ENCODE measurements at regions of chr17 and their contacts with region 1.

Region 1: DNA sequence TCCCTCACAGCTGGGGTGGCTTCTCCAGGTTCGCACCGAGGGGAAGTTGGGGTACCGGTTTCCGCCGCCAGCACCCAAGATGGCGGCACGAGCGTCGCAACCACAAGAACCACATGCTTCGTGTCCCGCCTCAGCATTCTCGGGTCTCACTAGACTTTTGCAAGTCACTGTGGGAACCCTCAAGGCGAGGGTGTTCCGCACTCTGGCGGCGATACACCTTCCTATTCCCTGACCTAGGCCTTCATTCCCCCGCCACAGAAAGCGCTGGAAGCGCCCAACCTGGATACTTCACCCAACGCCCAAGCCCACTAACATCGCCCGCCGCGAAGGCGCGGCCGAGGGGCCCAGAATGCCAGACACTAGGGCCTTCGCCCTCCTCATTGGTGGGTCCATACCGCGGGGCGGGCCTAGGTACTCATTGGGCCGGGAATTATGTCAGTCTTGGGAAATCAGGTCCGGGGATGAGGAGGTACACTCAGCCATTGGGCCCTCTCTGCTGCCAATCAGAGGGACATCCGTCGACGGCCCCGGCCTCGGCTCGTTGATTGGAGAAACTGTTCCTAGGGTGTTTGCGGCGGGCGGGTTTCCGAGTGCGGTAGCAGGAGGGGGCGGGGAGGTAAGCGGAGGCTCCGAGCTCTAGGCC is at the start of gene NFE2L1:
- DNase-seq: peak; percentile 97
- H3K4me3 ChIP-seq: peak within 1 kb of the TSS; percentile 77 to 90
- H3K27ac ChIP-seq: peak within 1 kb of the TSS; percentile 95 to 98
- H3K4me1 ChIP-seq: peaks cover 42 to 46% of the 10 kb centered on the region in 2 experiments
- H3K27me3 ChIP-seq: no peaks in the 10 kb centered on the region
- CTCF ChIP-seq: no peak
- EP300 ChIP-seq: peak in 1 of 2 experiments; percentile 14; a peak in 1 of 4 replicates
- RAD21 ChIP-seq: no peak
- polyA plus RNA-seq, gene NFE2L1: 159 and 174 TPM in 2 replicates

Region 2: DNA sequence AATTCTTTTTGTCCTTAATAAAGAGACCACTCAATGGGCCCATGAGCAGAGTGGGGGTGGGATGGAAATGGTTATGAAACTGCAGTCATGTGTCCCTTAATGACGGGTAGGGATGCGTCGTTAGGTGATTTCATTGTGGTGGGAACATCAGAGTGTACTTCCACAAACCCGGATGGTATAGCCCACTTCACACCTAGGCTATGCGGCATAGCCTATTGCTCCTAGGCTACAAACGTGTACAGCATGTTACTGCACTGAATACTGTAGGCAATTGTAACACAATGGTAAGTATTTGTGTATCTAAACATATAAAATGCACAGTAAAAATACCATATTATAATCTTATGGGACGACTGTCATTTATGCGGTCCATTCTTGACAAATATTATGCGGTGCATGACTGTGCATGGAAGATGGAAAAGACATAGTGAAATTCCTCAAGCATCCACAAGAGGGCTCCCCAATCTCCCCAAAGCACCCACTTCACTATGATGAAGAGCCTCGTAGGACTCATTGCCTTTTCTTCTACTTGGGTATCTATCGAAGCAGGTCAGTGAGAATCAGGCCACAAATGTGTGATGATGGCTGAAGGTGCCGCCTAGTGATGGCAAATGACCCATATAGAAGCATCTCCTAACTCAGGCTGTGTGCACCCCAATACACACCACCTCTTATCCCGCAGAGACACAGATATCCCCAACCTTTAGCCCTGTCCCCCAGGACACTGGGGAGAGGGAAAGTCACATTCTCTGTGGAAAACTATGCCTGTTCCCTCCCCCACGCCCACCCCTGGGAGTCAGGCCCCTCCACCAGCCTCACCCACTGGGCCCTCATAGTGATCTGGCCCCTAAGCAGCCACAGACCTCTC is 271.3 kb before region 1 on chr17:
- CTCF ChIA-PET with region 1: no interaction called
- POLR2A ChIA-PET with region 1: no interaction called
- DNase-seq: peak; percentile 81
- H3K4me3 ChIP-seq: no peak overlapping the region; a peak in 1 of 4 replicates
- H3K27ac ChIP-seq: no peak overlapping the region
- H3K4me1 ChIP-seq: peaks cover 0 to 4% of the 10 kb centered on the region in 2 experiments; a peak in 1 of 4 replicates
- H3K27me3 ChIP-seq: peaks cover 73% of the 10 kb centered on the region
- CTCF ChIP-seq: peak; percentile 78
- EP300 ChIP-seq: no peak
- RAD21 ChIP-seq: peak; percentile 76

Region 3: GRCh38 chr17:48002266-48002915 is 45.5 kb before region 1 on chr17:
- CTCF ChIA-PET with region 1: interaction called, 4 read pairs
- POLR2A ChIA-PET with region 1: interaction called, 15 read pairs
- DNase-seq: no peak
- H3K4me3 ChIP-seq: peak overlapping the region in 1 of 2 experiments; percentile 43; a peak in 2 of 4 replicates
- H3K27ac ChIP-seq: peak overlapping the region; percentile 99 to 100
- H3K4me1 ChIP-seq: peaks cover 61 to 65% of the 10 kb centered on the region in 2 experiments
- H3K27me3 ChIP-seq: no peaks in the 10 kb centered on the region
- CTCF ChIP-seq: no peak
- EP300 ChIP-seq: no peak
- RAD21 ChIP-seq: no peak

Region 4: GRCh38 chr17:48030531-48030930 is 17.3 kb before region 1 on chr17:
- CTCF ChIA-PET with region 1: interaction called, 1,200 read pairs
- POLR2A ChIA-PET with region 1: interaction called, 34 read pairs
- DNase-seq: no peak
- H3K4me3 ChIP-seq: no peak overlapping the region
- H3K27ac ChIP-seq: no peak overlapping the region
- H3K4me1 ChIP-seq: peaks cover 8 to 14% of the 10 kb centered on the region in 2 experiments; a peak in 3 of 4 replicates
- H3K27me3 ChIP-seq: no peaks in the 10 kb centered on the region
- CTCF ChIP-seq: no peak
- EP300 ChIP-seq: no peak
- RAD21 ChIP-seq: no peak

Region 5: GRCh38 chr17:48068491-48068961 is 20.7 kb after region 1 on chr17:
- CTCF ChIA-PET with region 1: interaction called, 449 read pairs
- POLR2A ChIA-PET with region 1: interaction called, 9 read pairs
- DNase-seq: no peak
- H3K4me3 ChIP-seq: no peak overlapping the region
- H3K27ac ChIP-seq: 0 out of 4 replicates have a peak overlapping the region, but pooled peaks of 1 of the 2 experiments have one; percentile 10
- H3K4me1 ChIP-seq: no peaks in the 10 kb centered on the region; a peak in 2 of 4 replicates
- H3K27me3 ChIP-seq: no peaks in the 10 kb centered on the region
- CTCF ChIP-seq: peak; percentile 62
- EP300 ChIP-seq: no peak
- RAD21 ChIP-seq: 0 out of 2 replicates have a peak, but pooled peaks have one; percentile 7

Region 6: DNA sequence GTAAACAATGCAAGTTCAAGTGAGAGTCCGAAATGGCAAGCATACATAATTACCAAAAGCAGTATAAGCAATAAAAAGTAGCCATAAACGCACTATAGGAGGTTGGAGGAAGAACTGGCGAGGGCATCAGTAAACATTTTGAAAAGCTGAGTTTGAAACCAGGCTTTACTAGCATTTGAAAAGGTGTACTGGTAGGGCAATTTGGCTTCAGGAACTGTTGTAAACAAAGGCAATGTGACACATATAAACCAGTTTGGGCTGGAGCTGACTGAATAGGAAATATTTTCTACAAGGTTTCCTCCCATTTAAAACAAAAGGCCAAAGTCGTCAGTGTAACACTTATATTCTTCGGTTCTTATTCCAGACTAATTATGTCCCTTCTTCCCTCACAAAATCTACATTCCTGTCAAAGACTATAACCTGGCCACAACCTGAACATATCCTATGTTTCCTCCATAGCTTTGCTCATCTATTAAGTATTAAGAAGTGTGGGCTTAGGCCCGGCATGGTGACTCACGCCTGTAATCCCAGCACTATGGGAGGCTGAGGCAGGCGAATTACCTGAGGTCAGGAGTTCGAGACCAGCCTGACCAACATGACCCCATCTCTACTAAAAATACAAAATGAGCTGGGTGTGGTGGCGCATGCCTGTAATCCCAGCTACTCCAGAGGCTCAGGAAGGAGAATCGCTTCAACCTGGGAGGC is 45.6 kb after region 1 on chr17:
- CTCF ChIA-PET with region 1: interaction called, 33 read pairs
- POLR2A ChIA-PET with region 1: interaction called, 4 read pairs
- DNase-seq: no peak
- H3K4me3 ChIP-seq: no peak overlapping the region
- H3K27ac ChIP-seq: no peak overlapping the region
- H3K4me1 ChIP-seq: no peaks in the 10 kb centered on the region
- H3K27me3 ChIP-seq: no peaks in the 10 kb centered on the region
- CTCF ChIP-seq: no peak
- EP300 ChIP-seq: no peak
- RAD21 ChIP-seq: no peak

Region 7: GRCh38 chr17:48107168-48108132 is 59.6 kb after region 1 on chr17 and contains the start of gene SNX11:
- CTCF ChIA-PET with region 1: interaction called, 3 read pairs
- POLR2A ChIA-PET with region 1: interaction called, 13 read pairs
- DNase-seq: peak; percentile 98
- H3K4me3 ChIP-seq: peak within 1 kb of the TSS; percentile 70 to 89
- H3K27ac ChIP-seq: peak within 1 kb of the TSS; percentile 76 to 92
- H3K4me1 ChIP-seq: peaks cover 4 to 7% of the 10 kb centered on the region in 2 experiments; a peak in 3 of 4 replicates
- H3K27me3 ChIP-seq: no peaks in the 10 kb centered on the region
- CTCF ChIP-seq: peak; percentile 21; the same call in 1 of the 2 replicates
- EP300 ChIP-seq: no peak
- RAD21 ChIP-seq: no peak
- polyA plus RNA-seq, gene SNX11: 19.0 and 31.6 TPM in 2 replicates

Region 8: DNA sequence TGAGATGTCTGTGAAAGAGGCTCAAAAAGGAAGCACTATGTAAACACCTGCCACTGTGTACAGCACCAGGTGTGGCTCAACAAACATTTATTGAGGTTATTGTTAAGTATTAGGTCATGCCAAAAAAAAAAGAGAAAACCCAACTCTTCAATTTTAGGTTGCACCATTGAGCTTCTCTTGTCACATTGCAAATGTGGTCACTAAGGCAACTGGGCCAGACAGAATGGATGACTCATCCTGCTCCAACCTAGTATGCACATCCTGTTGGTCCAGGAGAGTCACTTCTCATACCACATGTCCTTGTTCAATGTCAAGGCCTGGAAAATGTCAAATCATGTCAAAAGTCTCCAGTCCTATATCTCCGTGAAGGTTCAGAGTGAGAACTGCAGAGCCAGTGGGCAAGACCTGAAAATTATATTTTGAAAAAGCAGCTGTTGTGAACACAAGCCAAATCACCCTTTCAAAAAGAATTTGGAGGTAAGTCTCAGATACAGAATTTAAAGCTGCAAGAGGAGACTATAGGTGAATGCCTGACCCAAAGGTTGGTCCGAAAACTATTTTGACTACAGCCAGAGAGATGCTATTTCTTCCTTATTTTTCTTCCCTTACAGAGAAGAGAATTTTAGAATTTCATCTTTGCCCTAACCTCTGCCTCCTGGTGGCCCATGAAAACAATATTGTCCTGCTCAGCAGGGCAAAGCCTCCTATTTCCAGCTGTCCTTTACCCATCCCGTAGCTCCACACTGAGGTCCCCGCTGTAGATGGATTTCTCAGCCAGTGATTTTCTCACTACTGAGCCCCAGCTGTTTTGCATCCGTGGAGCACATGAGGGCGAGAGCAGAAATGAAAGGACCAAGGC is 458.2 kb after region 1 on chr17:
- CTCF ChIA-PET with region 1: no interaction called
- POLR2A ChIA-PET with region 1: no interaction called
- DNase-seq: no peak
- H3K4me3 ChIP-seq: no peak overlapping the region
- H3K27ac ChIP-seq: no peak overlapping the region; a peak in 1 of 4 replicates
- H3K4me1 ChIP-seq: no peaks in the 10 kb centered on the region
- H3K27me3 ChIP-seq: peaks cover 72% of the 10 kb centered on the region
- CTCF ChIP-seq: peak; percentile 42
- EP300 ChIP-seq: no peak
- RAD21 ChIP-seq: no peak

Measured in SK-N-SH (cell line).